Heart left ventricle (tissue), 16 donors: ENCODE measurements at regions of chr10 and their contacts with region 1.

Region 1: DNA sequence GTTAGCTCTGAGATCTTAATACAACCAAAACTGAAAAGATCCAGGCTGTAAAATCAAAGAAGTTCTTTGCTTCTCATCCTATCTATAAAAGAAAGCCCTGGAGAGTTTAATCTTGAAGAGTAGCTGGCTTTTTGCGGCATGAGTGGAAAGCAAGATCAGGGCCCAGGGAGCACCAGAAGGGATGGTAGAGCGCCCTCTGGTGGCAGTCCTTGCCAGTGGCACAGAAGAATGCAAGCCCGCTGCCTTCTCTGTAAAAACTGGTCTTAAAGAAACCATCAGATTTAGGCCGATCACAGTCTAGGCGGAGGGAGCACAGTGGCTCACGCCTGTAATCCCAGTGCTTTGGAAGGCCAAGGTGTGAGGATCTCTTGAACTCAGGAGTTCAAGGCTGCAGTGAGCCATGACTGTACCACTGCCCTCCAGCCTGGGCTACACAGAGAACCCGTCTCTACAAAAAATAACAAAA is 35.6 kb downstream of the CPN1 start:
- DNase-seq: peak; percentile 85 to 92 (median 87)
- ATAC-seq: peak; percentile 65 to 79 (median 74)
- H3K4me3 ChIP-seq: no peak overlapping the region
- H3K27ac ChIP-seq: peak overlapping the region in 3 of 12 donors; percentile 14 to 80 (median 50)
- H3K4me1 ChIP-seq: peaks cover 0 to 33% (median 21%) of the 10 kb centered on the region in 12 donors
- H3K27me3 ChIP-seq: no peaks in the 10 kb centered on the region
- CTCF ChIP-seq: peak; percentile 91 to 98 (median 96)
- POLR2A ChIP-seq: no peak

Region 2: GRCh38 chr10:99845837-99846382 is 200.1 kb before region 1 on chr10:
- intact Hi-C with region 1: loop called (anchors 1 to 5 kb)
- DNase-seq: peak in 4 of 5 donors; percentile 62 to 79 (median 74)
- ATAC-seq: peak; percentile 84 to 97 (median 91)
- H3K4me3 ChIP-seq: peak overlapping the region in 11 of 12 donors; percentile 0 to 53 (median 39)
- H3K27ac ChIP-seq: peak overlapping the region in 1 of 12 donors; percentile 40
- H3K4me1 ChIP-seq: peaks cover 0 to 20% (median 2%) of the 10 kb centered on the region in 12 donors
- H3K27me3 ChIP-seq: no peaks in the 10 kb centered on the region
- CTCF ChIP-seq: peak; percentile 89 to 97 (median 93)
- POLR2A ChIP-seq: no peak

Region 3: DNA sequence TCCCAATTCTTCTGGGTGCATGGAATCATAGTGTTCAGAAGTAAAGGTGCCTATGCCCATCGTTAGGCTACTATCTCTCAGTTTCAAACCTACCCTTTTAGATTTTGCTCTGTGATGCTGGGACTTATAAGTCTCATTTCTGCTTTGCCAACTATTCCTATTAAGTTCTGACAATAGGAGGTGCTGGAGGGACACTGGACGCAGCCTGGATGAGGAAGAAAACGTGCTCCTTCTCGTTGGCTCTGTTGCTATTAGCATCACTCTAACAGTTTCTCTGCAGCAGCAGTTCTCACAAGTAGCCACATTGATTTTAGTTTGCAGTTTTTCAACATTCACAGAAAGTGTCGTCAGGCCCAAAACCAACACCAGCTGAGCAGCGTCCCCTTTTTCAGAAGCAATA is 191.2 kb before region 1 on chr10:
- intact Hi-C with region 1: loop called in 1 of 10 experiments (anchors 2 kb)
- DNase-seq: peak in 1 of 5 donors; percentile 20
- ATAC-seq: peak in 3 of 4 donors; percentile 62 to 75 (median 73)
- H3K4me3 ChIP-seq: no peak overlapping the region
- H3K27ac ChIP-seq: no peak overlapping the region
- H3K4me1 ChIP-seq: no peaks in the 10 kb centered on the region
- H3K27me3 ChIP-seq: no peaks in the 10 kb centered on the region
- CTCF ChIP-seq: peak; percentile 5 to 67 (median 48)
- POLR2A ChIP-seq: no peak

Region 4: DNA sequence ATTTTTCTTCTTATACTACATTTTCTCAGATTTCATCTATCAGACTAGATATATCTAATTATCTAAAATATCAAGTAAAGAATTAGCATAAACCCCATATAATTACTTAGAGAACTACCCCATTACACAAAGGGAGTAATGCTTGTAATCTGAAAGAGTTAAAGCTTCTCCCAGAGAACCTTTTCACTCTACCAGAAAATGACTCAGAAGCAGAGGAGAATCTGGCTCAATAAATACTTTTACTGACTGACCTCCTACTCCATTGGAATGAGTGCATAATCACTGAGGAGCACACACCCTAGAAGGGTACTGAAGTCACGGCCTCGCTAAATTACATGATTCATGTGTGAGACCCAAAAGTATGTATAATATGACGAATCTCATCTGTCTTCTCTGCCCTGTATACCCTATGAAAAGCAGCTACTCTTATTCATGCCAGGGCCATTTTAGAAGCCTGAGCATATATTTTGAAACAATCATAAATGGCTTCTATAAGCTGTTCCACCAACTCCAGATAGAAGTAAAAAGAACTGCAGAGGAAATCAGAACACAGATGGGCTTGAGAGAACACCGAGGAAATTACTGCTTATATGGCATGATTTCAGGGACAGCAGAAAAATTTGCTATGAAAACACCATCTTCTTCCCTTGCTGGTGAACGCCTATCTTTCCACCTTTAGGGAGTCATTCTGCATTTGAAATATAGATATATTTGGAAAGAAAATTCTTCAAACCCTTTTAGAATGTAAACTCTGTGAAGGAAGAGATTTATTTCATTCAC is 69.0 kb before region 1 on chr10:
- intact Hi-C with region 1: loop called in 6 of 10 experiments (anchors 2 to 10 kb)
- DNase-seq: no peak
- ATAC-seq: peak; percentile 52 to 93 (median 86)
- H3K4me3 ChIP-seq: peak overlapping the region in 1 of 12 donors; percentile 7
- H3K27ac ChIP-seq: peak overlapping the region; percentile 47 to 80 (median 69)
- H3K4me1 ChIP-seq: peaks cover 0 to 59% (median 41%) of the 10 kb centered on the region in 12 donors
- H3K27me3 ChIP-seq: no peaks in the 10 kb centered on the region
- CTCF ChIP-seq: no peak
- POLR2A ChIP-seq: no peak

Region 5: GRCh38 chr10:100167553-100168312 is 121.7 kb after region 1 on chr10:
- intact Hi-C with region 1: no loop called
- DNase-seq: no peak
- ATAC-seq: no peak
- H3K4me3 ChIP-seq: peak overlapping the region in 6 of 12 donors; percentile 3 to 42 (median 16)
- H3K27ac ChIP-seq: peak overlapping the region in 10 of 12 donors; percentile 2 to 81 (median 24)
- H3K4me1 ChIP-seq: peaks cover 0 to 39% (median 0%) of the 10 kb centered on the region in 12 donors
- H3K27me3 ChIP-seq: no peaks in the 10 kb centered on the region
- CTCF ChIP-seq: no peak
- POLR2A ChIP-seq: no peak